Naive thymus-derived CD8-positive, alpha-beta T cell (primary cell): ENCODE measurements at regions of chr16 and their contacts with region 1.

Region 1: GRCh38 chr16:4734063-4734729 is at the starts of genes ANKS3 and DNAAF8:
- DNase-seq: peak; percentile 67 to 87 (median 82)
- ATAC-seq: peak; percentile 77 to 78
- H3K4me3 Mint-ChIP-seq: peak within 1 kb of the TSS; percentile 87 to 95 (median 92)
- H3K27ac Mint-ChIP-seq: peak within 1 kb of the TSS; percentile 86 to 95 (median 94)
- H3K4me1 Mint-ChIP-seq: peaks cover 10 to 23% (median 18%) of the 10 kb centered on the region in 4 donors
- H3K27me3 Mint-ChIP-seq: no peaks in the 10 kb centered on the region
- polyA plus RNA-seq, gene ANKS3: 4.3 to 9.0 (median 4.5) TPM
- polyA plus RNA-seq, gene DNAAF8: 0.34 to 0.48 TPM in 2 of 3 donors, not detected in the other

Region 2: GRCh38 chr16:4616047-4616811 is 118.0 kb before region 1 on chr16:
- POLR2A ChIA-PET with region 1: interaction called, 15 read pairs
- DNase-seq: peak; percentile 92 to 100 (median 99)
- ATAC-seq: peak; percentile 87 to 92
- H3K4me3 Mint-ChIP-seq: peak overlapping the region; percentile 92 to 99 (median 95)
- H3K27ac Mint-ChIP-seq: peak overlapping the region; percentile 95 to 100 (median 100)
- H3K4me1 Mint-ChIP-seq: peaks cover 11 to 48% (median 39%) of the 10 kb centered on the region in 4 donors
- H3K27me3 Mint-ChIP-seq: no peaks in the 10 kb centered on the region

Region 3: DNA sequence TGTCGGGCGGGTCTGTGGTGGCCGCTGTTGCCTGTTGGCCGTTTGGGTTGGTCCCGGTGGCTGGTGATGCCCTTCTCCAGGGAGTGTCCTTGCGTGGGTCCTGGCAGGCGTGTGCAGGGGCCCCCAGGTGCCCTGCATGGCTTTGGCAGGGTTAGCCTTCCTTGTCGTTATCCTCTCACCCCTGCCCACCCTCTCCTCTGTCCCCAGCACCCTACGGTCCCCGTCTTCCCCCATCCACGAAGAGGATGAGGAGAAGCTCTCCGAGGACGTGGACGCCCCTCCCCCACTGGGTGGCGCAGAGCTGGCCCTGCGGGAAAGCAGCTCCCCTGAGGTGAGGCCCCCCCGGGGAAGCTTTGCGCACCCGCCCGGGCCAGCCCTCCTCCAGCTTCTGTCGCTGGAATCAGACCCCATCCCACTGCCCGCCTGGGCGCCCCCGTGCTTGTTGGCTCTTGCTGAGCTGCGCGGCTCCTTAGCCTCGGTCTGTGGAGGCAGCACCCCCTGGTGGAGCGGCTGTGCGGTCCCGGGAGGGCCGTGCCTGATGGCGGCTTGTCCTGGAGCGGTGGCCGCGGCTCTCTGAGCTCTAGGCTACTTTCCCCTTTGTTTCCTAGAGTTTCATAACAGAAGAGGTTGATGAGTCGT is 51.5 kb before region 1 on chr16:
- POLR2A ChIA-PET with region 1: no interaction called
- DNase-seq: peak in 7 of 10 donors; percentile 40 to 73 (median 46)
- ATAC-seq: peak; percentile 38 to 40
- H3K4me3 Mint-ChIP-seq: peak overlapping the region in 2 of 10 donors; percentile 31 to 61
- H3K27ac Mint-ChIP-seq: peak overlapping the region in 4 of 10 donors; percentile 20 to 95 (median 56)
- H3K4me1 Mint-ChIP-seq: peaks cover 11 to 41% (median 26%) of the 10 kb centered on the region in 4 donors
- H3K27me3 Mint-ChIP-seq: no peaks in the 10 kb centered on the region

Region 4: DNA sequence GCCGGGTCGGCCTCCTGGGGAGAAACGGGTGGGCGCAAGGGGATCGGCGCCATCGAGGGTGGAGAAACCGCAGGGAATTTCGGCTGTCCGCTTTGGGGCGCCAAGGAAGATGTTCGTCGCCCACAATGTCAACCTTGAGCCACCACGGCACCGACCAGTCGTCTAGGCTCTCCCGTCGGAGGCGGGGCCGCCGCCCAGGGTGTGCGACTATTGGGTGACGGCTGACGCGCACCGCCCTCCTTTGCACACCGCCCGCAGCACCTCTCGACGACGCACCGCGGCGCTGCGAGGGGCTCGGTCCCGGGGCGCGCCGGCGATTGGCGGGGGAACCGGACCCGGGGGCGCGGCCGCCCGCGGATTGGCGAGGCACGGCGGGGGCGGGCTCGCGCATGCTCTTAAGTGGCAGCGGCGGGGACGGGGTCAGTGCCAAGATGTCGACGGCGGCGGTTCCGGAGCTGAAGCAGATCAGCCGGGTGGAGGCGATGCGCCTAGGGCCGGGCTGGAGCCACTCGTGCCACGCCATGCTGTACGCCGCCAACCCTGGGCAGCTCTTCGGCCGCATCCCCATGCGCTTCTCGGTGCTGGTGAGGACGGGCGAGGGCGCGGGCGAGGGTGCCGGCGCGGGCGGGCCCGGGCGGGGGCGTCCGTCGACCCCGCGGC is 40.8 kb before region 1 on chr16 and contains the start of gene NUDT16L1:
- POLR2A ChIA-PET with region 1: interaction called, 38 read pairs
- DNase-seq: peak; percentile 93 to 99 (median 98)
- ATAC-seq: peak; percentile 90 to 93
- H3K4me3 Mint-ChIP-seq: peak within 1 kb of the TSS; percentile 81 to 92 (median 86)
- H3K27ac Mint-ChIP-seq: peak within 1 kb of the TSS; percentile 53 to 96 (median 89)
- H3K4me1 Mint-ChIP-seq: peaks cover 6 to 26% (median 19%) of the 10 kb centered on the region in 4 donors
- H3K27me3 Mint-ChIP-seq: no peaks in the 10 kb centered on the region
- polyA plus RNA-seq, gene NUDT16L1: 90.0 to 131 (median 119) TPM

Region 5: DNA sequence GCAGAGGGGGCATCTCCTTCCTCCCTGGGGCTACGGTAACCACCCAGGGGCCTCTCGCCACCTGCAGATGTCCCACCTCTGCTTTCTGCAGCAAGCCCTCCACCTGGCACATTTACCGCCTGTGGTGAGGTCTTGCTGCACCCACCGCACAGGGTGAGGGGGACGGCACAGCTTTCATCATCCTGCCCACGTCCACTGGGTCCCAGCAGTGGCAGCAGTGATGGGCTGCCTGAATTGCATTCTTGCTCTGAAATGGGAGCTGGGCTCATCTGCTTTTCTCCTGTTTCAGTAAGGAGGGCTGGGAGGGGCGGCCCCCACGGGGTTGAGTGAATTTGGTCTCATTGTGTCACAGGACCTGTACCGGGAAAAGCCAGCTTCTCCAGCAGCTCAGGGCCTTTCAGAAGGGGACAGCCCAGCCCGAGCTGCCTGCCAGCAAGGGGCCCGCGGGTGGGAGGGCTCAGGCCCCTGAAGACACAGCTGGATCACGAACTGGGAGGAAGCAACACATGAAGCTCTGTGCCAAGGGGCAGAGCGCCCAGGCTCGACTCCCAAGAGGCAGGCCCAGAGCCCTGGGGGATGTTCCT is 12.9 kb after region 1 on chr16:
- POLR2A ChIA-PET with region 1: interaction called, 26 read pairs
- DNase-seq: peak in 2 of 10 donors; percentile 14 to 24
- ATAC-seq: peak; percentile 33 to 45
- H3K4me3 Mint-ChIP-seq: peak overlapping the region in 7 of 10 donors; percentile 22 to 89 (median 67)
- H3K27ac Mint-ChIP-seq: peak overlapping the region; percentile 24 to 94 (median 86)
- H3K4me1 Mint-ChIP-seq: peaks cover 16 to 33% (median 24%) of the 10 kb centered on the region in 4 donors
- H3K27me3 Mint-ChIP-seq: no peaks in the 10 kb centered on the region

Region 6: DNA sequence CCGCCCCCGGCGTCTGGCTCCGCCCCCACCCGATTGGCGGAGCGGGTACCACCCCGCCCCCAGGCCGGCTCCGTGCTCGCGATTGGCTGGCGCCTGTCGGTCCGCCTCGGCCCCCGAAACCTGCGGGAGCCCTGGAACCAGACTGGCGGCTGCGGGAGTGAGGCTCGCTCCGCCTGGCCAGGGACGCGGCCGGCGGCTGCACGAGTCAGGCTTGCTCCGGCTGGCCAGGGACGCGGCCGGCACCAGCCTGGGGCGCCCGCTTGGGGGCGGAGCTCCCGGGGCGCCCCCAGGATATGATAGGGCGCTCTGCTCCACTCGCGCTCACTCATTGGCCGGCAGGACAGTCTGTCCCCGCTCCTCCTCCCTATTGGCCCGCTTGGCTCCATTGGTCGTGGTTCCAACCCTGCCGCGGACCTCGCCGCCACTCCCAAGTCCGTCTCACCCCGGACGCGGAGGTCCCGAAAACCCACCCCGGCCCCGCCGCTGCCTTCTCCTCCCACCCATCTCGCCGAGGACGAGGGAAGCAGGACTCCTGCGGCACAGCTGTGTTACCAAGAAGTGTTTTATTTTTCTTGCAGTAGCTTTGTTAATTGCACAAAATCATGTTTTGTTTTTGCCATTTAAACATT is 68.6 kb after region 1 on chr16:
- POLR2A ChIA-PET with region 1: interaction called, 25 read pairs
- DNase-seq: peak; percentile 76 to 99 (median 89)
- ATAC-seq: peak; percentile 83 to 87
- H3K4me3 Mint-ChIP-seq: peak overlapping the region; percentile 80 to 91 (median 86)
- H3K27ac Mint-ChIP-seq: peak overlapping the region in 8 of 10 donors; percentile 58 to 95 (median 86)
- H3K4me1 Mint-ChIP-seq: peaks cover 7 to 22% (median 13%) of the 10 kb centered on the region in 4 donors
- H3K27me3 Mint-ChIP-seq: no peaks in the 10 kb centered on the region